Testis (tissue), 5 donors: ENCODE measurements at regions of chr20 and their contacts with region 1.

Region 1: GRCh38 chr20:62668441-62669027 is 26.2 kb downstream of the SLCO4A1 start:
- DNase-seq: peak; percentile 87
- H3K4me3 ChIP-seq: no peak overlapping the region
- H3K27ac ChIP-seq: no peak overlapping the region
- H3K4me1 ChIP-seq: peaks cover 19% of the 10 kb centered on the region
- H3K27me3 ChIP-seq: no peaks in the 10 kb centered on the region
- CTCF ChIP-seq: peak; percentile 83 to 93 (median 87)
- POLR2A ChIP-seq: no peak

Region 2: GRCh38 chr20:62818592-62819493 is 150.3 kb after region 1 on chr20:
- intact Hi-C with region 1: loop called (anchors 10 kb)
- DNase-seq: peak; percentile 57
- H3K4me3 ChIP-seq: no peak overlapping the region
- H3K27ac ChIP-seq: no peak overlapping the region
- H3K4me1 ChIP-seq: peaks cover 34% of the 10 kb centered on the region
- H3K27me3 ChIP-seq: no peaks in the 10 kb centered on the region
- CTCF ChIP-seq: no peak
- POLR2A ChIP-seq: no peak